Calu3 (cell line): ENCODE measurements at regions of chr3 and their contacts with region 1.

Region 1: GRCh38 chr3:138332472-138333076 is 2.9 kb upstream of the NME9 start:
- DNase-seq: no peak
- H3K4me3 Mint-ChIP-seq: no peak overlapping the region
- H3K27ac Mint-ChIP-seq: no peak overlapping the region
- H3K4me1 Mint-ChIP-seq: peaks cover 7% of the 10 kb centered on the region
- H3K27me3 Mint-ChIP-seq: peaks cover 20% of the 10 kb centered on the region
- CTCF ChIP-seq: peak; percentile 58

Region 2: GRCh38 chr3:138180375-138181029 is 152.1 kb before region 1 on chr3:
- CTCF ChIA-PET with region 1: interaction called, 4 read pairs
- intact Hi-C with region 1: loop called (anchors 5 kb)
- DNase-seq: peak; percentile 51
- H3K4me3 Mint-ChIP-seq: no peak overlapping the region
- H3K27ac Mint-ChIP-seq: no peak overlapping the region
- H3K4me1 Mint-ChIP-seq: peaks cover 20% of the 10 kb centered on the region
- H3K27me3 Mint-ChIP-seq: no peaks in the 10 kb centered on the region
- CTCF ChIP-seq: peak; percentile 47

Region 3: DNA sequence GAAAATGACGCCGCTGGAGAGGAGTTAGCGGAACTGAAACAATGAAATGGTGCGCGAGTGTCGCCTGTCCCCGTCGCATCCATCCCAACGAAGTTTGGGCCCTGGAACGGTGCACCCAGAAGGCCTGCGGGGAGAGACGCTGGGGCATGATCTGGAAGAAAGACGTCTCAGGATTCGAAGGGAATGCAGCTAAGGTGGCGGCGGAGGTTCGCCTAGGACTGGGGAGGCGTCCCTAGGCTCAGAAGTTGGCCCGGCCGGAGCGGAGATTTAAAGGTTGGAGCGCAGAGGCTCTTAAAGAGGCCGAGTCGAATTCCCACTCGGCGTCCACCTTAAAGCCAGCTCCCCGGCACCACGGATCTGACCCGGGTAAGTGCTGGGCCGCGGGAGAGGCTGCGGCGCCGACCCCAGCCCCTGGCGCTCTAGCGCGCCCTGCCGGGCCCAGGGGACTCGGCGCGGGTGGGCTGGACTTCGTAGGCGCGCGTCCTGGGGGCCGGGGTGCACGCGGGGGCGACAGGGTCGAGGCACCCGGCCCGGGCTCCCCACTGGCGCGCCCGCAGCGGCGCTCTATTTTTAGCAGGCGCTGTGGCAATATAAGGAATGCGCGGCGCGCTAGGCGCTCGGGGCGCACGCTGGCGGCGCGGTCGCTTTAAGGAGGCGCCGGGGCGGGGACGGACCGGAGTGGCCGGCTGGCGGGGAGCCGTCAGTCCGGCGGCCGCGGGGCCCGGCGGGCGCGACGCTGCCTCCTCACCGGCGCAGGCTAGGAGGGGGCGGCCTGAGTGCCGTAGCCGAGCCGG is 15.6 kb after region 1 on chr3 and contains the start of gene MRAS:
- CTCF ChIA-PET with region 1: interaction called, 3 read pairs
- intact Hi-C with region 1: loop called (anchors 1 kb)
- DNase-seq: peak; percentile 82
- H3K4me3 Mint-ChIP-seq: peak within 1 kb of the TSS; percentile 82
- H3K27ac Mint-ChIP-seq: peak within 1 kb of the TSS; percentile 15
- H3K4me1 Mint-ChIP-seq: peaks cover 8% of the 10 kb centered on the region
- H3K27me3 Mint-ChIP-seq: peaks cover 16% of the 10 kb centered on the region
- CTCF ChIP-seq: peak; percentile 36
- total RNA-seq, gene MRAS: 12.7 and 13.2 TPM in 2 replicates

Region 4: DNA sequence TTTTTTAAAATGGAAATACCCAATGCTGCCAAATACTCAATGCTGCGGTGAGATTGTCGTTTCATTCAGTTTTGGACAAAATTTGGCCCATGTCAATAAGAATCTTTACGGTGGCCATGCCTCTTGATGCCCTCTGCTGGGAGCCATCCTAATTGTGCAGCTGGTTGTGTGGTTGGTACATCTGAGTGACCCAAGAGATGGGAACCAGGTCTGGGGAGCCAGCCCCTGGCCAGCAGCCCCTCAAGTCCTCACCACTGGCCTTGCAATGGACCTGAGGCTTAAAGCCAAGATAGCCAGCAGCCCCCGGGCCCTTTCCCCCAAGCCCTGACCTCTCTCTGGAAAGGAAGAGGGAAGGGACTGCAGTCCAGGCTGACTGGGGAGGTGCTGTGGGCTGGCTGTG is 65.4 kb after region 1 on chr3:
- CTCF ChIA-PET with region 1: no interaction called
- intact Hi-C with region 1: loop called (anchors 1 kb)
- DNase-seq: no peak
- H3K4me3 Mint-ChIP-seq: no peak overlapping the region
- H3K27ac Mint-ChIP-seq: no peak overlapping the region
- H3K4me1 Mint-ChIP-seq: no peaks in the 10 kb centered on the region
- H3K27me3 Mint-ChIP-seq: peaks cover 30% of the 10 kb centered on the region
- CTCF ChIP-seq: no peak

Region 5: DNA sequence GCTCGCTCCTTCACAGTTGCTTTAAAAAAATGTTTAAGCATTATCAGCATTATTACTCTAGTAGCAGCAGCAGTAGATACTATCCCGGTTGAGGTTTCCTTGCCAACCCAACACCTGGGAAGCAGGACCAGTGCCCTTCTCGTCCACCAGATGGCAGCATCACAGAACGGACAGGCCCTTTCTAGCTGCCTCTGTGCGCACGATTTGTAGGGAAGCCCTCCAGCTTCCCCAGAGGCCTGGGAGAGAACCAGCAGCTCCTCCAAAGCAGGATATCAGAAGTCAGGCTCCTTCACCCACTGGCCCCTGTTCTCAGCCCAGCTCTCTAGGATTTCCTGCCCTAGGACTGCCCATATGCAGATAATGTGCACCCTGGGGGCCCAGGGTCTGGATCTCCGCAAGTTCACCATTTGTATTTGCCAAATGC is 85.0 kb after region 1 on chr3:
- CTCF ChIA-PET with region 1: interaction called, 4 read pairs
- intact Hi-C with region 1: loop called (anchors 5 kb)
- DNase-seq: peak; percentile 94
- H3K4me3 Mint-ChIP-seq: no peak overlapping the region
- H3K27ac Mint-ChIP-seq: no peak overlapping the region
- H3K4me1 Mint-ChIP-seq: no peaks in the 10 kb centered on the region
- H3K27me3 Mint-ChIP-seq: peaks cover 59% of the 10 kb centered on the region
- CTCF ChIP-seq: peak; percentile 90

Region 6: GRCh38 chr3:138694287-138695007 is 361.9 kb after region 1 on chr3:
- CTCF ChIA-PET with region 1: interaction called, 3 read pairs
- intact Hi-C with region 1: loop called (anchors 10 kb)
- DNase-seq: no peak
- H3K4me3 Mint-ChIP-seq: no peak overlapping the region
- H3K27ac Mint-ChIP-seq: no peak overlapping the region
- H3K4me1 Mint-ChIP-seq: peaks cover 13% of the 10 kb centered on the region
- H3K27me3 Mint-ChIP-seq: no peaks in the 10 kb centered on the region
- CTCF ChIP-seq: no peak

Region 7: GRCh38 chr3:138717348-138717747 is 384.8 kb after region 1 on chr3:
- CTCF ChIA-PET with region 1: no interaction called
- intact Hi-C with region 1: no loop called
- DNase-seq: no peak
- H3K4me3 Mint-ChIP-seq: no peak overlapping the region
- H3K27ac Mint-ChIP-seq: no peak overlapping the region
- H3K4me1 Mint-ChIP-seq: no peaks in the 10 kb centered on the region
- H3K27me3 Mint-ChIP-seq: no peaks in the 10 kb centered on the region
- CTCF ChIP-seq: no peak

Region 8: DNA sequence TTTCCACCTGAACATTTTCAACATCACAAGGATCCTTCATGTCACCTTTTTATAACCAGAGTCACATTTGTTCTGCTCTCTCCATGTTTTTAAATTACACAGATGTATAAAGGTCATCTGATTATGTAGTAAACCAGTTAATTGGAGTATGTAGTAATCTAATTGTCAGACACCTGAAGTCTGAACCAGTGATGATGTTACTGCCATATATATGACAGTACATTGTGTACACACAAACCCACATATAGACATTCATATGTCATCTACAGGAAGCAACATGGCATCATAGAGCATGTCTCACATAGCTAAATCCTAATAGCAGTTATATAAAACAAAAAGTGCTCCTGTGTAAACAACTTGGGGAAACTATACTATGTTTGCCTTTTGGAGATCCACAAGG is 808.0 kb after region 1 on chr3:
- CTCF ChIA-PET with region 1: no interaction called
- intact Hi-C with region 1: no loop called
- DNase-seq: no peak
- H3K4me3 Mint-ChIP-seq: no peak overlapping the region
- H3K27ac Mint-ChIP-seq: no peak overlapping the region
- H3K4me1 Mint-ChIP-seq: no peaks in the 10 kb centered on the region
- H3K27me3 Mint-ChIP-seq: no peaks in the 10 kb centered on the region
- CTCF ChIP-seq: no peak